ENCODE measurements at regions of chr19 and their contacts with region 1.

Region 1: DNA sequence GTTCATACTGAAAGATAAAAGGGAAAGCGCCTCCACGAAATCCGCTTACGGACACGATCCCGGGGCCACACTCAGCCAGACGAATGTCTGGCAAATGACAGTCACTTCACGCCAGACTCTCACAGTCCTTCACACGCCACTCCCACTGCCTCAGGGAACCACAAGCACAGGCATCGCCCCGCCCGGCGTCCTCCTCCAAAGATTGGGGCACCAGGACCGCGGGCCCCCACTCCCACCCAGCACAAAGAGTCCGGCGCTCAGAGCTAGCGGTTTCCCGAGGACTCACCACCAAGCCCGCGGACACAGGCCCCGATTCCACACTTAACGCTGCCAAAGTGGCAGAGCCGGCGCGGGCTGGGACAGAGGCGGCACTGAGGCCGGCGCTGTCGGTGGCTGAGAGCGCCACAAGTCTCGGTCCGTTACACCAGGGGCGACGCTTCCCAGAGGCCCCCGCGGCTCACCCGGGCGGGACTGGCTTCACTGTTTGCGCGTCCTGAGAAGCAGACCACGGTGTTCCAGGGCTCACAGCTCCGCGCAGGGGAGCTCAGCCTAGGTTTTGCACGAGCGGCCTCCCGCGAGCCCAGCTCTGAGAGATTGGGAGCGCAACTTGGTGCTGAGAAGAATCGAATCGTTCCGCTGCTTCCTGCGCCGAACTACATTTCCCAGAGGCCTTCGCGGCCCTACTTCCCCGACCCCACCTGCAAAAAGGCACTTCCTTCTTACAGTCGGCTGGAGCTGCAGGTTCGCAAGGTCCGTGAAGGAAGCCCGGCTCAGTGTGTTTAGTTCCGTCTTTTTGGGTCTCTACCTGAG is at the start of gene ZNF569:
- DNase-seq: peak; percentile 93
- H3K4me3 Mint-ChIP-seq: peak within 1 kb of the TSS; percentile 96
- H3K27ac Mint-ChIP-seq: peak within 1 kb of the TSS; percentile 92
- H3K4me1 Mint-ChIP-seq: peaks cover 28% of the 10 kb centered on the region
- H3K27me3 Mint-ChIP-seq: no peaks in the 10 kb centered on the region
- total RNA-seq, gene ZNF569: 8.6 to 10.6 TPM

Region 2: DNA sequence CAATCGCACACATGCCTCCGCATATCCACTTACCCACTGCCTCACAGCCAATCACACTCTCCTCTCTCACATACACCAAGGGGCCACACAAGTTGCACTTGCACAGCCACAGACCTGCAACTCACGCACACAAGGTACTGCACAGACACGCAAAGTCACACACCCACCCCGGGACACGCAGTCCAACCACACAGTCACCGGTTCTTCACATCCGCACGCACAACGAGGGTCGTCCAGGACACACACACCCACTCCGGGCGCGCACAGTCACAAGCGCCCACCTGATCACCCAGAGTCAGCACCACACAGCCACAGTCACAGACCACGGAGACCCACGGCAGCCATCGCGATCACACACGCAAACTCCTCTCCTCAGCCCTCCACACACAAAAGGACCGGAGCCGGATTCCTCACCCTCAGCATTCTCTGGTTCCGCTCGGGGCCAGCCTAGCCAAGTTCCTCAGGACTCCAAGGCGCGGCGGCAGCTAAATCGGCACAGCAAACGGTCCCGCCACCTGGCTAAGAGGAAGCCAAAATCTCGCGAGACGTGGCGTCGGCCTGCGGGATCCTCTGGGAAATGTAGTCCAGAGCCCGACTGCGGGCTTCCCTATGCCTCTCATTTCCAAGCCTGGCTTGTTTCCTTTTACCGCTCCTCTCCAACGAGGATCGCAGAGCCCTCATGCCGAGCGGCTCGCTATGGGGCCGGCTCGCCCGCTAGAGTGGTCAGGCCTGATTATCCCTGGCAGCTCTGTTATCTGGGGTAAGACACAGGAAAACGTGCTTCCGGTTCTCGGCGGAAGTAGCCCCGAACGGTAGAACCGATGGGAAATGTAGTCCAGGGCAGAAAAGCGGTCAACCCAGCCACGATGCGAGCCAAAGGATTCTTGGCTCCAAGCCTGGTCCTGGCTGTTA is 694.4 kb before region 1 on chr19 and contains the start of gene ZNF850:
- CTCF ChIA-PET with region 1: no interaction called
- intact Hi-C with region 1: loop called (anchors 1 kb)
- DNase-seq: peak; percentile 97
- H3K4me3 Mint-ChIP-seq: peak within 1 kb of the TSS; percentile 98
- H3K27ac Mint-ChIP-seq: peak within 1 kb of the TSS; percentile 90
- H3K4me1 Mint-ChIP-seq: peaks cover 21% of the 10 kb centered on the region
- H3K27me3 Mint-ChIP-seq: peaks cover 2% of the 10 kb centered on the region
- total RNA-seq, gene ZNF850: 11.2 to 11.3 TPM

Region 3: DNA sequence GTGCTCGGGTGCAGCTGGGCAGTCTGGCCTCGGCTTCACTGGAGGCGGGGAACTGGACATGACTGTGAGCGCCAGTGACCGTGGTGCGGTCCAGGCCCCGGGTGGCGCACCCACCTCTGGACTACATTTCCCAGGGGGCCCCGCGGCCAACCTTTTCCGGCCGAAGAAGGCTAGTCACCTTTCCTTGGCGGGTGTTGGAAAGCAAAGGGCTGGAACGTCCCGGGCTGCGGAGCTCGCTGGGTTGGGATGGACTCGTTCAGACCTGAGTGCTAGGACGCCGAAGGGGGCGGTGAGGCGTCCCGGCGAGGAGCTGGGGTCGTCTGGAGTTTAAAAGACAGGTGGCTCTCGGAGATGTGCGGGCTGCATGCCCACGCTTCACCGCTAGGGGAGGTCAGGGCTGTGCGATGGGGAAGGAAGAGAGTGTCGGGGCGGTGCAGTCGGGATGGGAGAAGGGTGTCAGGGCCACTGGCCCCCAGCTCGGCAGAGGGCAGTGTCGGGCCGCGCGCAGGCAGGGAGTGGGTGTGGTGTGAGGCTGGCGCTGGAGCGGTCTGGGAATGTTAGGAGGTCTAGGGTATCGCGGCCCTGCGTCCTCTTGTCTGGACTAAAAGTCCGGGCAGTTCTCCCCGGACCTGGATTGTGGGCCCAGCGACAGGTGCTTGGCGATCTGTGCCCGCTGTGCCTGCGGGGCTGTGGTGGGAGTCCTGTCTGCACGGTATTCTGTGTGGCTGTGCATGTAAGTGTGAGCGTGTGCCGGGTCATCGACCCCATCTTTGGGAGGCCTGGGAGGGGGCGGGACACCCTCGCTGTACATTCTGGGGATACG is 493.8 kb before region 1 on chr19:
- CTCF ChIA-PET with region 1: no interaction called
- intact Hi-C with region 1: loop called (anchors 1 kb)
- DNase-seq: peak; percentile 91
- H3K4me3 Mint-ChIP-seq: peak overlapping the region; percentile 92
- H3K27ac Mint-ChIP-seq: peak overlapping the region; percentile 95
- H3K4me1 Mint-ChIP-seq: peaks cover 11% of the 10 kb centered on the region
- H3K27me3 Mint-ChIP-seq: no peaks in the 10 kb centered on the region

Region 4: GRCh38 chr19:37334179-37335071 is 132.6 kb before region 1 on chr19:
- CTCF ChIA-PET with region 1: no interaction called
- intact Hi-C with region 1: loop called (anchors 1 kb)
- DNase-seq: peak; percentile 91
- H3K4me3 Mint-ChIP-seq: peak overlapping the region; percentile 85
- H3K27ac Mint-ChIP-seq: peak overlapping the region; percentile 77
- H3K4me1 Mint-ChIP-seq: peaks cover 27% of the 10 kb centered on the region
- H3K27me3 Mint-ChIP-seq: no peaks in the 10 kb centered on the region

Region 5: GRCh38 chr19:37492213-37492612 is 25.2 kb after region 1 on chr19:
- CTCF ChIA-PET with region 1: no interaction called
- intact Hi-C with region 1: no loop called
- DNase-seq: no peak
- H3K4me3 Mint-ChIP-seq: no peak overlapping the region
- H3K27ac Mint-ChIP-seq: no peak overlapping the region
- H3K4me1 Mint-ChIP-seq: no peaks in the 10 kb centered on the region
- H3K27me3 Mint-ChIP-seq: no peaks in the 10 kb centered on the region

Region 6: GRCh38 chr19:37506387-37507166 is 39.6 kb after region 1 on chr19 and contains the start of gene ZNF793:
- CTCF ChIA-PET with region 1: no interaction called
- intact Hi-C with region 1: loop called (anchors 1 kb)
- DNase-seq: peak; percentile 85
- H3K4me3 Mint-ChIP-seq: no peak within 1 kb of the TSS
- H3K27ac Mint-ChIP-seq: no peak within 1 kb of the TSS
- H3K4me1 Mint-ChIP-seq: no peaks in the 10 kb centered on the region
- H3K27me3 Mint-ChIP-seq: no peaks in the 10 kb centered on the region
- total RNA-seq, gene ZNF793: 3.8 to 3.9 TPM

Region 7: DNA sequence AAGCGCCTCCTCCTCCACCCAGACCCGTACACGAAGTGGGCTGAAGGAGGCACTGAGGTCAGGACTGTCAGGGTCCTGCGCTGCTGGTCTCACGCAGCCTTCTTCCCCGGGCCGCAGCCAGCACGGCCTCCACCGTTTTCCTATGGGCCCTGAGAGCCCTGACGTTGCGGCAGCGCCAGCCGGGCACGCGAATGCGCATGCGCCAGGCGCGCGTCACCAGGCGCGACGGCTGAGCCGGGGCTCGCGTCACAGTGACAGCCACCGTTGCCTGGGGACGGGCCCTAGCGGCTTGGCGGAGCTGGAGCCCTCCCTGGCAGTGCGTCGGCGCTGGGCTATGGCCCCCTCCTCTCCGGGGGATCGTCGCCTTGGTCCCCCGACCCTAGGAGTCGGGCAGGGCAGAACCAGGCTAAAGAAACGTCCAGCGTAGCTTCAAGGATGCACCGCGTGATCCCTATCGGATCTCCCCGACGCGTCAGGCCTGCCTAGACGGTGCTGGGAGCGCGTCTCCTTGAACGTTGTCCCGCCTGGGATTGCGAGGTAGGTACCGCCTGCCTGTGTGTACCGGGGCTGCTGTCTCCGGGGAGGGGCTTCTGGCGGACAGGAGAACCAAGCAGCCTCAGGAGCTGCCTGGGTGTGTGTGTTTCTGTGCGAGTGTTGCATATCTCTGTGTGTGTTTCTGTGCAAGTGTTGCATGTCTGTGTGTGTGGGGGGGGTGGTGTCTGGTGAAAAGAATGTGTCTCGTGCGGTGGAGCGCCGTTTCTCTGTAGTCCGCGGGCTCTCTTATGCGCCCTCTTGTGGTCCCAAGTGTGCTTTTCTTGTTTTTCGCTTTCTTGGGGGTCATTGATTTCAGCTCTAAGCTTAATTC is 84.4 kb after region 1 on chr19:
- CTCF ChIA-PET with region 1: no interaction called
- intact Hi-C with region 1: no loop called
- DNase-seq: peak; percentile 58
- H3K4me3 Mint-ChIP-seq: peak overlapping the region; percentile 76
- H3K27ac Mint-ChIP-seq: no peak overlapping the region
- H3K4me1 Mint-ChIP-seq: peaks cover 6% of the 10 kb centered on the region
- H3K27me3 Mint-ChIP-seq: peaks cover 2% of the 10 kb centered on the region

Region 8: GRCh38 chr19:37655689-37656371 is 188.8 kb after region 1 on chr19:
- CTCF ChIA-PET with region 1: no interaction called
- intact Hi-C with region 1: loop called (anchors 1 kb)
- DNase-seq: peak; percentile 87
- H3K4me3 Mint-ChIP-seq: peak overlapping the region; percentile 93
- H3K27ac Mint-ChIP-seq: peak overlapping the region; percentile 93
- H3K4me1 Mint-ChIP-seq: peaks cover 29% of the 10 kb centered on the region
- H3K27me3 Mint-ChIP-seq: no peaks in the 10 kb centered on the region